OCI-LY7 (cell line): ENCODE measurements at regions of chr4 and their contacts with region 1.

Region 1: DNA sequence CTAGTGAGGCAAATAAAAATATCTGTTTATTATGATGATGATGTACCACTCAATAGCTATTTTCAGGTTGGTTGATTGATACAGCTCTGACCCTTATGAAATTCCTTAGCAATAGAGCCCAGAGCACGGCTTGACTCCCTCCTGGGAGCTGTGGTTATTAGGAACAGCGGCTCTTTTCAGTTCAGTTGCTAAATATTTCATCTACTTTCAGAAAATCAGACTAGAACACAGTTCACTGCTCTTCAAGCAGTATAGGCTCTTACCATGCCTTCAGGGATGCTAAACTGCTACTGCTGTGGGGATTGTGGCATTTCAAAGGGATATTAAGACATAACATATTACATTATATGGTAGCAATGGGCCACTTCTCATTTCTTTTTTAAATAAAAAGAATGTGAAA is 218.8 kb downstream of the SNCA start:
- DNase-seq: no peak
- H3K4me3 ChIP-seq: no peak overlapping the region
- H3K27ac ChIP-seq: no peak overlapping the region
- H3K4me1 ChIP-seq: no peaks in the 10 kb centered on the region
- CTCF ChIP-seq: no peak

Region 2: GRCh38 chr4:89146196-89146595 is 472.0 kb before region 1 on chr4:
- CTCF ChIA-PET with region 1: no interaction called
- POLR2A ChIA-PET with region 1: interaction called, 13 read pairs
- intact Hi-C with region 1: no loop called
- DNase-seq: no peak
- H3K4me3 ChIP-seq: no peak overlapping the region
- H3K27ac ChIP-seq: no peak overlapping the region
- H3K4me1 ChIP-seq: no peaks in the 10 kb centered on the region
- CTCF ChIP-seq: no peak